WTC11 (cell line): ENCODE measurements at regions of chr5 and their contacts with region 1.

Region 1: DNA sequence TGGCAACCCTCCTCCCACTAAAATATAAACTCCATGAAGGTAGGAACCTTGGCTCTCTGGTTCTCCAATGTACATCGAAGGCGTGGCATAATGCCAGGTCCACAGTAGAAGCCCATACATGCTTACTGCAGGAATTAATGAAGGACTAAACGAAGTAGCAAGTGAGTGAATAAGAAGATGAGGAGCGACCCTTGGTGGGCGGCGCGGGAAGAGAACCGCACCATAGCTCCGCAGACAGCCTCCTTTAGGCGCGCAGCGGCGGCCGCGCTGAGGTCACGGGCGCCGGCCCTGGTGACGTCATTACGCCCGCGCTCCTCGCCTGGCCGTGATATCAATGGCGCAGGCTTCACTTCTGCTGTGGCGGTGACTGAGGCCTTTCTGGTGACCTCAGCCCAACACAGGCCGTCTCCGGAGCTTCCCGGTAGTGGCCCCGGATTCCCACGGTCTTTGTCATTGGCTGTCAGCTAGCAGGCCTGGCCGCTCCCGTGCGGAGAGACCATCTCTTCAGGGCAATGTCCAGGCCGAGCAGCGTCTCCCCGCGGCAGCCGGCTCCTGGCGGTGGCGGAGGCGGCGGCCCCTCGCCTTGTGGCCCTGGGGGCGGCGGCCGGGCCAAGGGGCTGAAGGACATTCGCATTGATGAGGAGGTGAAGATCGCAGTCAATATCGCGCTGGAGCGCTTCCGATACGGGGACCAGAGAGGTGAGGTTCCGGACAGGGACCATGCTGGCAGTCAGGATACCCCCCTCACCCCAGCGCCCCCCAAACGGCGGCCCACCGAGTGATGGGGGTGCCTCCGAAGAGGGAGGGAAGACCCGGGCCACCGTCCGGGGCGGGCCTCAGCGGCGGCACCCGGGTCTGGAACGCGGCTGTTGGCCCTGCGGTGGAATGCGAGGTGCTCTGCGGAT is at the start of gene YTHDC2:
- DNase-seq: peak; percentile 82
- ATAC-seq: peak; percentile 95
- H3K4me3 Mint-ChIP-seq: peak within 1 kb of the TSS; percentile 88
- H3K27ac Mint-ChIP-seq: peak within 1 kb of the TSS; percentile 77
- H3K4me1 Mint-ChIP-seq: peaks cover 15% of the 10 kb centered on the region
- H3K27me3 Mint-ChIP-seq: peaks cover 2% of the 10 kb centered on the region
- CTCF ChIP-seq: no peak
- total RNA-seq, gene YTHDC2: 17.6 to 21.6 TPM (median 19.9 TPM) in 3 replicates

Region 2: GRCh38 chr5:113336975-113337374 is 176.7 kb before region 1 on chr5:
- CTCF ChIA-PET with region 1: interaction called, 12 read pairs
- POLR2A ChIA-PET with region 1: no interaction called
- DNase-seq: peak; percentile 16
- ATAC-seq: peak; percentile 89
- H3K4me3 Mint-ChIP-seq: no peak overlapping the region
- H3K27ac Mint-ChIP-seq: no peak overlapping the region
- H3K4me1 Mint-ChIP-seq: 0 out of 2 replicates have a peak, but pooled peaks cover 2% of the 10 kb centered on the region
- H3K27me3 Mint-ChIP-seq: no peaks in the 10 kb centered on the region
- CTCF ChIP-seq: no peak

Region 3: DNA sequence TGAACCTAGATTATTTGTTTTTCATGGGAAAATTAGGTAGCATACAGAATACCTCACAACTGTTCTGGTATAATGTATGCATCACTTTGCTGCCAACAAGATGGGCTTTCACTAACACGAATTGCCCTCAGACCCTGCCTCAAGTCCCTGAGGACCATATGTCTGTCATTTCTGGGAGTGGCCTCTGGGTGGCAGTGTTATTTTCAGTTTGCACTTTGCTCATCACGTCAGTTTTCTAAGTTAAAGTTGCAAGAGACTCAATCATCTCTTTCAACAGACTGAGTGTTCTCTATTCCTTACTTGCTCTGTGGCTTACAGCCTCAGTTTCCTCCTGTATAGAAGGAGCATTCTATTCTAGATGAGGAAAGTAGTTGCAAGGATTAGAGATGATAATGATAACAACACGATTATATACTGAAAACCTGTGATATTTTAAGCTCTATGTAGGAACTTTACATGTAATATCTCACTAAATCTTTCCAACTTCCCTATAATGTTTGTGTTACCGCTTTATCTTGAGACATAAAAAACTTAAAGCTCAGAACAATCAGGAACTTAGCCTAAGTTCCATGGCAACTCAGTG is 134.6 kb before region 1 on chr5:
- CTCF ChIA-PET with region 1: interaction called, 10 read pairs
- POLR2A ChIA-PET with region 1: no interaction called
- DNase-seq: peak; percentile 76
- ATAC-seq: peak; percentile 87
- H3K4me3 Mint-ChIP-seq: no peak overlapping the region
- H3K27ac Mint-ChIP-seq: no peak overlapping the region
- H3K4me1 Mint-ChIP-seq: peaks cover 3% of the 10 kb centered on the region; the same call in 1 of the 2 replicates
- H3K27me3 Mint-ChIP-seq: no peaks in the 10 kb centered on the region
- CTCF ChIP-seq: peak; percentile 53; the same call in 1 of the 2 replicates